ENCODE measurements at regions of chr6 and their contacts with region 1.

Region 1: DNA sequence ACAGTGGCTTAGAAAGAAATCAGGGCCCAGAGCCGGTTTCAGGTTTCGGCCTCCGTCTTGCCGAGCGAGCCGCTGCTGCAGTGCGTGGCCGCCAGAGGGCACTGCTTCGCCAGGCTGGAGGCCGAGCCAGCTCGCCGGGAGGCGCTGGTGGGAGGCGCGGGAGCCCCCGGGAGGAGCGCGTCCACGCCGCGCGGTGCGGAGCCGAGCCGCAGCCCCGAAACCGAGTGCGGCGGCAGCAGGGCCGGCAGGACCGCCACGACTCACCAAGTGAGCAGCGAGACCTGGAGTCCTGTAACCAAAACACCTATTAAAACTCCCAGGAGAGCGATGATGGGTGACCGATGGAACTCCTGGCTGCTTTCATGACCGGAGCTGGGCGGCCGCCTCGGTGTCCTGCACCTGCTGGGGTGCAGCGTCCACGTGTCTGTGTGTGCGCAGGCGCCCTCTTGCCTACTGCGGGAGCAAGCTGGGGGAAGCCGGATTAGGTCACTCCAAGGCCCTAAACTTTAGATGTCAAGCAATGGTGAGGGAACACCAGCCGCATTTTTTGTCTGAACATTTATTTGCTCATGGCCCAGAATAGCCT is 186.9 kb upstream of the UST start:
- DNase-seq: no peak
- H3K4me3 ChIP-seq: peak overlapping the region; percentile 59
- CTCF ChIP-seq: peak; percentile 98

Region 2: DNA sequence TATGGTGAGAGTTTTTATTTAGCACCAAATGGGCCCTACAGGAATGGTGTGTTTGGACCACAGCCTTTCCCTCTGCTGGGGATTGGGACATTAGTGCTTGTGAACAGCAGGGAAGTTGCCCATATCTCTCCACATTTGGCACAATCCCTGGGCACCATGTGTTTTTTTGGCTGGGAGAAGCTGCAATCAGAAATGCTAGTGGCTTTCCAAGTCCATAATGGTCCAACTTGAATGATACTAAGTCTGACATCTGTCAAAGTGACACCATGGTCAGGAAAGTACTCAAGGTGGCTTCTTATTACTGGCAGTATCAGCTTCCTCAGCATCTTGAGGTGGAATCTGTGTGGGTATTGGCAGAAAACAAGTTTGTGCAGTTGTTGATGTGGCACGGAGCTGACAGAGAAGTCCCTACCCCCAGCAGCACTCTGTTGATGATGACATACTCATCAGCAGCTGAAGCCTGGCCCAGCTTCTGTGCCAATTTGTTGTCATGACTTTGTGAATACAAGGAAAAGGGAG is 164.3 kb before region 1 on chr6:
- CTCF ChIA-PET with region 1: no interaction called
- POLR2A ChIA-PET with region 1: no interaction called
- DNase-seq: no peak
- H3K4me3 ChIP-seq: no peak overlapping the region
- CTCF ChIP-seq: no peak

Region 3: DNA sequence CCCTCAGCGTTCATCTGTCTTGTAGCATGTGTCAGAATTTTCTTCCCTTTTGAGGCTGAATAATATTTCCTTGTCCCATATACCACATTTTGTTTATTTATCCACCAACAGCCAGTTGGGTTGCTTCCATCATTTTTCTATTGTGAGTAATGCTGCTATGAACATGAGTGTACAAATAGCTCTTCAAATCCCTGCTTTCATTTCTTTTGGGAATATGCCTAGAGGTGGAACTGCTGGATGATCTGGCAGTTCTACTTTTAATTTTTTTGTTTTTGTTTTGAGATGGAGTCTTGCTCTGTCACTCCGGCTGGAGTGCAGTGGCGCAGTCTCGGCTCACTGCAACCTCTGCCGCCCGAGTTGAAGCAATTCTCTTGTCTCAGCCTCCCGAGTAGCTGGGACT is 152.6 kb before region 1 on chr6:
- CTCF ChIA-PET with region 1: no interaction called
- POLR2A ChIA-PET with region 1: no interaction called
- DNase-seq: peak; percentile 89
- H3K4me3 ChIP-seq: no peak overlapping the region
- CTCF ChIP-seq: no peak

Region 4: DNA sequence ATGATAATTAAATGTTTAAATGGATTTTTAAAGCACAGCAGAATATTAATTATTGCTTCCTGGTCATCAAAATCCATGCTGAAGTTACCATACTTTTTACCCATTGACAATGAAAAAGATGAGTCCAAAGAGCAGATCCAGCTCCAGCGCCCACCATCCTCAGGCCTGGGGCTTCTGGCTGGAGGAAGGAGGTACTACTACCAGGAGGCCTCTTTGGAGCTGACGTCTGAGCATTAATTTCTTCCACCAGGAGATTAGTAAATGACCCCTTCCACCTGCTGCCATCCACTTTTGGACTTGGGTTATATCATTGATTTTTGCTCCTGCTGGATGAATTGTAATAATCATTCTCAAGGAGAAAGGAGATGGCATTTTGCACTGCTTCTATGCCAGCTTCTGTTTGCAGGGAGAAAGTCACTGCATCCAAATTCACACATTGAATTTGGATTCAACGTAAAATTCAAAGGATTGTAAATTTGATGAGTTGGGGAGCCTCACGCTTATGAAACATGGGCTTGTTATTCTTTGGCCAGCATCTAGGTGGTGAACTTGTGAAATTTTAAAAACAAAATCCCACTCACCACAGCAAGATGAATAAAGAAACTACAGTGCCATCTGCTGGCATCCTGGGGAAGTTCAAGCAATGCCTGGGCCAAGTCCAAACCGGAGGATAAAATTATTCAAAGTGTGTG is 95.5 kb before region 1 on chr6:
- CTCF ChIA-PET with region 1: no interaction called
- POLR2A ChIA-PET with region 1: no interaction called
- DNase-seq: peak; percentile 37
- H3K4me3 ChIP-seq: no peak overlapping the region
- CTCF ChIP-seq: peak; percentile 66

Region 5: GRCh38 chr6:148538261-148539190 is 21.4 kb before region 1 on chr6:
- CTCF ChIA-PET with region 1: interaction called, 13 read pairs
- POLR2A ChIA-PET with region 1: no interaction called
- DNase-seq: no peak
- H3K4me3 ChIP-seq: no peak overlapping the region
- CTCF ChIP-seq: no peak

Region 6: DNA sequence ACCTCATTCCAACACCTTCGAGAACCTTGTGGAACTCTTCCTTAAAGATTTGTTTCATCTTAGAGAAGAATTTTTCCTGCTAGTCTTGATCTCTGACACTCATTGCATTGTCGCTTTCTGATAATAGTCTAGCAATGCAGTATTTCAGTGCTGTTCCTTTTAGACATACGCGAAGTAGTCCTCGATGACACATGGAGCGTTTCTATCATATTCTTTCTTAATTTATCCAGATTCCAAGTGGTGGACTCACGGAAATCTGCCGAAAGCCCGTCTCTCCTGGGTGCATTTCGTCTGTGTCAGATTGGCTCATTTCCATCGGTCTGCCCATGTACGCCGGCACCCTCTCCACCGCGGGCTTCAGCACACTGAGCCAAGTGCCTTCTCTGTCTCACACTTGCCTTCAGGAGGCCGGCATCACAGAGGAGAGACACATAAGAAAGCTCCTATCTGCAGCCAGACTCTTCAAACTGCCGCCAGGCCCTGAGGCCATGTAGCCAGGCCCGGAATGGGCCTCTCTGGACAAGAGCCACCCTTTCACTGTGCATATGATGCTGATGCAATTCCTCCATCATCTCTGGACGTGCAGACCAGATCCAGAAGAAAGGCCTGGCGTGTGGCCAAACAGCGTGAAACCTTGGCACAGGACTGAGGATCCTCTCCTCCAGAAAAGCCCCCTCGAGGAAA is 11.7 kb before region 1 on chr6:
- CTCF ChIA-PET with region 1: interaction called, 47 read pairs
- POLR2A ChIA-PET with region 1: no interaction called
- DNase-seq: no peak
- H3K4me3 ChIP-seq: no peak overlapping the region
- CTCF ChIP-seq: no peak

Region 7: GRCh38 chr6:148947621-148948444 is 387.9 kb after region 1 on chr6:
- CTCF ChIA-PET with region 1: interaction called, 20 read pairs
- POLR2A ChIA-PET with region 1: no interaction called
- DNase-seq: no peak
- H3K4me3 ChIP-seq: no peak overlapping the region
- CTCF ChIP-seq: peak; percentile 87

Measured in AG04449 (cell line).